ENCODE measurements at regions of chr9 and their contacts with region 1.

Region 1: GRCh38 chr9:136849038-136849959 is at the start of gene PHPT1:
- DNase-seq: peak; percentile 98
- ATAC-seq: peak; percentile 91
- H3K4me3 Mint-ChIP-seq: peak within 1 kb of the TSS; percentile 93
- H3K27ac Mint-ChIP-seq: peak within 1 kb of the TSS; percentile 88
- H3K4me1 Mint-ChIP-seq: peaks cover 8% of the 10 kb centered on the region
- H3K27me3 Mint-ChIP-seq: peaks cover 12% of the 10 kb centered on the region
- total RNA-seq, gene PHPT1: 94.5 to 98.9 TPM

Region 2: DNA sequence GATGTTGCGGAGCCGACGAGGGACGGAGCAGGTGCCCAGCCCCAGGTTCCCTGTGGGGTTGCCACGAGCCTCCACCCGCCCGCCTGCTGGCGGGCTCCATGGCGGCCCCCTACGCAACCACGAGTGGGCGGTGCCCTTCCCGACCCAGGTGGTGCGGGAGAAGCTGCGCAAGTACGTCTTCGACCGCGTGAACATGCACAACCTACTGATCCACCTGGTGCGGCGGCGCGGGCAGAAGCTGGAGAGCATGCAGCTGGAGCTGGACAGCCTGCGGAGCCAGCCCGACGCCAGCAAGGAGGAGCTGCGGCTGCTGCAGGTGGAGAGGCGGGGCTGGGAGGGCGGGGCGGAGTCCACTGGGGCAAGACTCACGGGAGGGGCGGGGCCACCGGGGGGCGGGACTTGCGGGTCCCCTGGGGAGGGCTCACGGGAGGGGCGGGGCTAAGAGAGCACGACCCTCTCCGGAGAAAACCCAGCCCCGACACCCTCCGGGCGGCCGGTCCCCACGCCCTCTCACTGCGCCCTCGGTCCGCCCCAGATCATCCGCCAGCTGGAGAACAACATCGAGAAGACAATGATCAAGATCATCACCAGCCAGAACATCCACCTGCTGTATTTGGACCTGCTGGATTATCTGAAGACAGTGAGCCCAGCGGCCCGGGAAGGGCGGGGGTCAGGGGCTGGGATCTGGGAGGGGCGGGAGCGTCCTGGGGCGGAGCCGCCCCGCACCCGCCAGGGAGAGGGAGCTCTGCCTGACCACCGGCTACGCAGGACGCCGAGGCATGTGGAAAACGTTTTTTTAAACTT is 49.2 kb before region 1 on chr9:
- CTCF ChIA-PET with region 1: no interaction called
- POLR2A ChIA-PET with region 1: no interaction called
- intact Hi-C with region 1: loop called in 1 of 2 experiments (anchors 1 kb)
- DNase-seq: peak; percentile 95
- ATAC-seq: peak; percentile 79
- H3K4me3 Mint-ChIP-seq: peak overlapping the region; percentile 72
- H3K27ac Mint-ChIP-seq: no peak overlapping the region
- H3K4me1 Mint-ChIP-seq: peaks cover 21% of the 10 kb centered on the region
- H3K27me3 Mint-ChIP-seq: peaks cover 4% of the 10 kb centered on the region

Region 3: DNA sequence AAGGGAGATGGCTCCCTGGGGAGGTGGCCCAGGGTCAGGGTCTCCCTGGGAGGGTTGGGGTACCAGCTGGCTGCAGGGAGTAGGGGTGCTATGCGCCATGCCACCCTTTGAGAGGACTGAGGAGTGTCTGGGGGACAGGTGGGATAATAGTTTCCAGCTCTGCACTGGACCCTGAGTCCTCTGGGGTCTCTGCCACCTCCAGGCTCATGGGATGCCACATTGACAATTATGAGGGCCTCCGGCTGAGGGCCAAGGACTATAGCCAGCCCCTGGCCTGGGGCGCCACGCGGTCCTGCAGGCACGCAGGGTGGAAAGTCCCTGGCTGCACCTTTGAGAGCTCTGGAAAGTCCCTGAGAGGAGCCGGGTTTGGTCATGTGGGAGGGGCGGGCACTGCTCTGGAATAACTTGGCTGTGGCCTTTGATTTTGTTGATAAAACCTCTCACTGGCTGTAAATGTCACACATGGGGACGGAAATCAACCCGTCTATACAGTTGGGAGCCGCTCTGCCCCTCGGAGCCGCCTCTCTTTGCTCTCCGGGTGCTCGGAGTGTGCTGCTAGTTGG is 53.0 kb after region 1 on chr9:
- CTCF ChIA-PET with region 1: no interaction called
- POLR2A ChIA-PET with region 1: no interaction called
- intact Hi-C with region 1: loop called (anchors 1 to 5 kb)
- DNase-seq: peak; percentile 93
- ATAC-seq: peak; percentile 85
- H3K4me3 Mint-ChIP-seq: peak overlapping the region; percentile 62
- H3K27ac Mint-ChIP-seq: peak overlapping the region; percentile 98
- H3K4me1 Mint-ChIP-seq: peaks cover 41% of the 10 kb centered on the region
- H3K27me3 Mint-ChIP-seq: no peaks in the 10 kb centered on the region

Region 4: DNA sequence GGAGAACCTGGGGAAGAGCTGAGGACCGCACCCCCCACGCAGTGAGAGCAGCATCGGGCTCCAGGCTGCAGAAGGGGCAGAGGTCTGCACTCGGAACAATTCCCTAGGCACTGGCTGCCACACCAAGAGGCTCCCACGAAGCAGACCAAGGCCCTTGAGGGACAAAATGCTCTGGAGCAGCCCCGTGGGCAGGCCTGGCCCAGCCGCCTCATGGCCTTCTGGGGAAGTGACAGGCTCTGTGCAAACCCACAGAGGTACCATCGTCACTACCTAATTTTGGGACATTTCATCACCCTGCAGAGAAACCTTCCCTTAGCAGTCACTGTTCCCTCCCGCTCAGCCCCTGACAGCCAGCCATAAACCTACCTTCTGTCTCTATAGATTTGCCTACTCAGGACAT is 79.3 kb after region 1 on chr9:
- CTCF ChIA-PET with region 1: no interaction called
- POLR2A ChIA-PET with region 1: no interaction called
- intact Hi-C with region 1: no loop called
- DNase-seq: no peak
- ATAC-seq: no peak
- H3K4me3 Mint-ChIP-seq: no peak overlapping the region
- H3K27ac Mint-ChIP-seq: no peak overlapping the region
- H3K4me1 Mint-ChIP-seq: peaks cover 17% of the 10 kb centered on the region
- H3K27me3 Mint-ChIP-seq: no peaks in the 10 kb centered on the region

Region 5: DNA sequence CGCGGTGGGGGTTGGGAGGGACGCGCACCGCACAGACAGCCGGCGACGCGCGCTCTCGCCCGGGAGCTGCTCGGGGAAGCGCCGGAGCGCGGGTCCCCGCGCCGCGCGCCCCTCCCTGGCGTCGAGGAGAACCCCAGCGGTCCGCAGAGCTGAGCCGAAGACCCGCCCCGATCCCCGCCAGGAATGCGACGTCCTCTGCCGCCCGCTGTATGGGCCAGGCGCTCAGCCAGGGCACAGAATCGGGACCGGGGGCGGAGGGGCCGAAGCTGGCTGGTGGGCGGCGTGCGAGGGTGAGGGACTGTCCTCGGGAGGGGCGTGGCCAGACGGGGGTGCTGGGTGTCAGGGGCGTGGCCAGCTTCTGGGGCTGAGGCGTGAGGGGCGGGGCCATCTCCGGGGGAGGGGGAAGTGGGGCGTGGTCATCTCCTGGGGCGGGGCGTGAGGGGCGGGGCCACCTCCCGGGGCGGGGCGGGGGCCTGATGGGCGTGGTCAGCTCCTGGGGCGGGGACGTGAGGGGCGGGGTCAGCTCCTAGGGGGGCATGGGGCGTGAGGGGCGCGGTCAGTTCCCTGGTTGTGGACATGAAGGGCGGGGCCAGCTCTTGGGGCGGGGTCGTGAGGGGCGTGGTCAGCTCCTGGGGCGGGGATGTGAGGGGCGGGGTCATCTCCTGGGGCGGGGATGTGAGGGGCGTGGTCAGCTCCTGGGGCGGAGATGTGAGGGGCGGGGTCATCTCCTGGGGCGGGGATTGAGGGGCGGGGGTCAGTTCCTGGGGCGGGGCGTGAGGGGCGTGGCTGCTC is 129.0 kb after region 1 on chr9:
- CTCF ChIA-PET with region 1: no interaction called
- POLR2A ChIA-PET with region 1: no interaction called
- intact Hi-C with region 1: loop called in 1 of 2 experiments (anchors 1 kb)
- DNase-seq: peak; percentile 87
- ATAC-seq: peak; percentile 47
- H3K4me3 Mint-ChIP-seq: no peak overlapping the region
- H3K27ac Mint-ChIP-seq: no peak overlapping the region
- H3K4me1 Mint-ChIP-seq: peaks cover 13% of the 10 kb centered on the region
- H3K27me3 Mint-ChIP-seq: no peaks in the 10 kb centered on the region

Region 6: DNA sequence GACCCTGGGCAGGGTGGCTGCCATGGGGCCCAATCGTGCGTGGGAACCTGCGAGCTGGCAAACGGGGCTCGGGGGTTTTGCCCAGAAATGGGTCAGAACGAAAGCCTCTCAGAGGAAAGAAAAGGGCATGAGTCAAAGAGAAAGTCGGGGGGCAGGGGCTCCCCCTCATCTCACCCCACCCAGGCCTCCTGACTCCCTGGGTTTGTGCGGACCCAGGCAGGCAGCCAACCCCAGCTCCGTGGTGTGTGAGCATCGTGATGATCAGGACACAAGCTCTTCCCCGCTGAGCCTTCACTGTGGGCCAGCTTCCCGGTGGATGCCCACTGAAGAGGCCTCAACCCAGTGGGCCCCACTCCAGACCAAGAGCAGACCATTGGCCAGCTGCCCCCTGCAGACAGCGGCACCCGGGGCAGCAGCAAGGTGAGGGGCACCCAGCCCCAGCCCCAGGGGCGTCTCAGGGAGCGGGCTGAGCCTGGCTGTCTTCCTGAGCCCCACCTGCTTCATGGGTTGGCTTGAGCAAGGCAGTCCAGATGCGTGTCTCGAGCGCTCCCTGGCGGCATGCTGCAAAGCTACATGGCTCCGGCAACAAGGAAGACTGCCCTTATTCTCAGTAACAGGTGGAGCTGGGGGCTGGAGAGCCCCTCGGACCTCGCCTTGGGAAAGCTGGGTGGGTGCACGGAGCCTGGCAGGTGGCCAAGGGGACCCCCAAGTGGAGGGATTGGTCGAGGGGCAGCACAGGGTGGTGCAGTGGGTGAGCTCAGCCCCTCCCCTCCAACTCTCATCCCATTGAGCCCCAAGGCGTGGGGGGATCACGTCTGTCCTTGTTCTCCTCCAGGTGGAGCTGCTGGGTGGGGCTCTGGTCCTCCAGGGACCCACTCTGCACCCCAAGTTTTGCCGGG is 185.8 kb after region 1 on chr9:
- CTCF ChIA-PET with region 1: interaction called, 8 read pairs
- POLR2A ChIA-PET with region 1: no interaction called
- intact Hi-C with region 1: loop called in 1 of 2 experiments (anchors 10 kb)
- DNase-seq: peak; percentile 96
- ATAC-seq: peak; percentile 80
- H3K4me3 Mint-ChIP-seq: peak overlapping the region; percentile 66
- H3K27ac Mint-ChIP-seq: peak overlapping the region; percentile 83
- H3K4me1 Mint-ChIP-seq: peaks cover 36% of the 10 kb centered on the region
- H3K27me3 Mint-ChIP-seq: no peaks in the 10 kb centered on the region

Region 7: DNA sequence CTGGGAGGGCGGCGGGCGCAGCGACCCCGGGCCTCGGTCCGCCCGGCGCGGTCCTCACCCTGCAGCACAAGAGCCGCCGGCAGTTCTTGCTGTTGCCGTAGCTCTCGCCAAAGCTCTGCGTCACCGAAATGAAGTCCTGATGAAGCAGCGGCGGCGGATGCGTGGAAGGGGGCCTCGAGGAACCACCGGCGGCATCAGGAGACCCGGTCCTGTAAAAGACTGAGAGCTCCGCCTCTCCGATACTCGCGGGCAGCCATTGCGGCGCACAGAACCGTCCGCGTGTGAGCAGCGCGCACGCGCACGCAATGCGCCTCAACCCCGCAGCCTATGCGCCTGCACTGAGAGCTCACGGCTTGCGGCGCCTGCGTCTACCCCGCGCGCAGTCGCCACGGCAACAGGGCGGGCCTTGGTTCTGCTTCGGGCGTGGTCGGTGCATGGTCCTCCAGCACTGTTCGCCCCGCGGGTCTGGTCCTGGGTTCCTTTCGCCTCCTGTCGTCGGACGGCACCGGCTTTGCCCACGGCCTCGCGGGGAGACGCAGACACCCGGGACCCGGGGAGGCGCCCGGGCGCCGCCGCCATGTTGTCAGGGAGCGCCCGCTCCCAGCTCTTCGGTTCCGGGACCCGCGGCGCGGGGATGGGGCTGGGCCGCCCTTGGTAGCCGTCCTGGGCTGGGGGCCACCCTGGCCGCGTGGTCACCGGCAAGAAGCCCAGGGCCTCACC is 280.3 kb after region 1 on chr9:
- CTCF ChIA-PET with region 1: no interaction called
- POLR2A ChIA-PET with region 1: no interaction called
- intact Hi-C with region 1: loop called in 1 of 2 experiments (anchors 1 kb)
- DNase-seq: peak; percentile 95
- ATAC-seq: peak; percentile 96
- H3K4me3 Mint-ChIP-seq: peak overlapping the region; percentile 89
- H3K27ac Mint-ChIP-seq: peak overlapping the region; percentile 70
- H3K4me1 Mint-ChIP-seq: peaks cover 21% of the 10 kb centered on the region
- H3K27me3 Mint-ChIP-seq: peaks cover 5% of the 10 kb centered on the region

Measured in activated CD4-positive, alpha-beta T cell treated with anti-CD3 and anti-CD28 coated beads for 36 hours (primary cell).